ENCODE measurements at regions of chr2 and their contacts with region 1.

Region 1: DNA sequence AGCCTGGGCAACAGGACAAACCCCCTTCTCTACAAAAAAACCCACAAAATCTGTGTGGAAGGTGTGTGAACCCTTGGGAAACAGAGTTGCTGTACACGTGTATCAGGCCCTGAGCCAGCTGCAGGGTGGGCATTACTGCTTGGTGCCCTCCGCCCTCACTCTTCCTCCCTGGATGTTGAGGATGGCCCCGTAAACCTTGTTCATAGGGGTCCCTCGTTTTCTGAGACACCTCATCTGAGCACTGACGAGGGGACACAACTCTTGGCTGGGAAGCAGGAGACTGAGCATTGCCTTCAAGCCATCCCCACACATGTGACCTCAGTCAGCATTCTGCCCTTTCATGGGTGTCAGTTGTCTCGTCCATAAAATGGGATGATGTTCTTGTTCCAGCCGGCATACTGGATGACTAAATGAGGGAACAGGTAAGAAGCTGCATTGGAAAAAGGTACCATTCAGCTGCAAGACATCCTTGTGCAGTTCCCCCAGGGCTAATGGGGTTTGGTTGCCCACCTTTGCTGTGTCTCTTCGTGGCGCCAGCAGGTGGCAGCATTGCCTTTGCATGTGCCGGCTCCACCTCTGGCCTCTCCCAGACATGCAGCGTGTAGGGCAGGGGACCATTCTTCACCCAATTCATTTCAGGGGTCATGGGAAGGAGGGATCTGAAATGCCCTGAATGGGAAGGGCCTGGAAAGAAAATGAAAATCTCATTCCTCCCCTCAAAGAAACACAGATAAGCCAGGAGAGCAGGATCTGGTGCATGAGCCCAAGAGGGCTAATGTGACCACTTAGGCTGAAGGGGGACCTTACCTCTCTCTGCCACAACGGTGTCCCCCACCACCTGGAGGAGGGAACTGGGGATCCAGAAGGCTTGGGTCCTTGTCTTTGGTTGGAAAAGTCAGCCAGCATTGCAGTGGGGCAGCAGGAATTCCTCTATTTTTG is 36.4 kb upstream of the HAAO start:
- DNase-seq: peak; percentile 84 to 90
- ATAC-seq: peak; percentile 94
- H3K4me3 ChIP-seq: no peak overlapping the region
- H3K27ac ChIP-seq: no peak overlapping the region
- H3K4me1 ChIP-seq: no peaks in the 10 kb centered on the region
- H3K27me3 ChIP-seq: no peaks in the 10 kb centered on the region

Region 2: DNA sequence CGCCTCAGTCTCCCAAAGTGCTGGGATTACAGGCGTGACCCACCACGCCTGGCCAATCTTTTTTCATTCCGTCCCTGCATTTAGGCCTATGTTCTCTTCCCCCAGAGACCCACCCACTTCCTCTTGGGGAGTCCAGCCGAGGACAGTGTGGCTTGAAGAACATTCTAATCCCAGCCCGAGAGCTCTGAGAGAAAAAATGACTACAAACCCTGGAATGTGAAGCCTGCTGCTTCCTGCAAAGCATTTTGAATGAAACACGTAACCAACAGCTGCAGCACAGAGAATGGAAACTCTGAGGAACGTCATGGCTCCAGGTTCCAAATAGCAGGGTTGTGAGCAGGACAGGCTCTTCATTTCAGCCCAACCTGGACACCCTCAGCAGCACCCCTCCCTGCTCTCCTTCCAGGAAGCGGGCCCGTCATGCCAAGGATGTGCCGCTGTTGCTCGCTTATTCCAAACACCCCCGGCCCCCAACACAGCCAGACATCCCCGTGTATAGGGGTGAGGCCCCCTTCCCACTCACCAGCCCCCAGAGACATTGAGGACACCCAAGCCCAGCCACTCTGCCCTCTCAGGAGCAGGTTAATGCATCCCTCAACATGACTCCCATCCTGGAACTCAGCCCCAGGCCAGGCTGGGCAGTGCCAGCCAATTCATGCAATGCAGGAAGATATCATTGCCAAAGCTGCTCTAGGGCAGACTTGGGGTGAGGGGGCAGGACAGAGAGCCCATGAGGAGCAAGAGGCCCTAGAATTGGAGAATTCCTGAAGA is 257.9 kb after region 1 on chr2:
- intact Hi-C with region 1: no loop called
- DNase-seq: peak; percentile 85 to 89
- ATAC-seq: peak; percentile 92
- H3K4me3 ChIP-seq: no peak overlapping the region
- H3K27ac ChIP-seq: peak overlapping the region; percentile 94 to 99
- H3K4me1 ChIP-seq: peaks cover 0 to 6% of the 10 kb centered on the region in 2 donors
- H3K27me3 ChIP-seq: no peaks in the 10 kb centered on the region

Region 3: GRCh38 chr2:43239981-43240761 is 411.4 kb after region 1 on chr2:
- intact Hi-C with region 1: loop called in 1 of 2 experiments (anchors 10 kb)
- DNase-seq: no peak
- ATAC-seq: no peak
- H3K4me3 ChIP-seq: no peak overlapping the region
- H3K27ac ChIP-seq: no peak overlapping the region
- H3K4me1 ChIP-seq: no peaks in the 10 kb centered on the region
- H3K27me3 ChIP-seq: no peaks in the 10 kb centered on the region

Region 4: DNA sequence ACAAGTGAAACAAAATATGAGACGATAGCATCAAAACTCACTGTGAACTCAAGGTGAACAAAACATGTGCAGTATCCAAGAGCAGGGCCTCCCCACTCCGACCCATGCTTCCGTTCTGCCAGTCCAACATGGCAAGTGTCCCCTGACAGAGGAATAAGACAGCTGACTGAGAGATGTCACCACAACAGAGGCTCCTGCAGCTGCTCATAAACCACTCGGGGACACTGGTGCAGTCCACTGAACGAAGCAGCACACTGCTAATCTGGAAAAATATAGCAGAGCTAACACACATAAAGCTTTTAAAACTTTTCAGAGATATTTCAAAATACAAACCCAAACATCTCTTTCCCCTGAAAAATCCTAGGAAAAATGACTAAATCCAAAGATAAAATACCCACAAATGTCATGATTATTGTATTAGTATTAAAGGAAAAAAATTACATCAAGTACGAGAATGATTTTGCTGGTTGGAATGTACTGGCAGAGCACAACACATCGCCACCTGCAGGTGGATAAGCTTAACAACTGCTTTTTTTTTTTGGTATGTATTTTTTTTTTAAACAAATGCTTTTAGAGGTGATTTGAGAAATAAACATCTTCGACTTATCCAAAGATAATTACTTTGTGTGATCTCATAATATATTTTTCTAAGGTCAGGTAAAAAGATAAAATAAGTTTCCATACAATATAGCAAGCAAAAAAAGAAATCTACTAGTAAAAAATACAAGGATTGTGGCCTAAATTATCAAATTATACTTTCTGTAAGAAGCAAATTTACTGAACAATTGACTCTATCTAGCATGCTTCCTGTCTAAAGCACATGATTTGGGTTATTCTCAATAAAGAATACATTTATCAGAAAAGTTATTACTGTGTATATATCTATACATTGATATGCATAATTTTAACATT is 748.5 kb after region 1 on chr2:
- intact Hi-C with region 1: loop called (anchors 10 kb)
- DNase-seq: peak in 1 of 2 donors; percentile 51
- ATAC-seq: no peak
- H3K4me3 ChIP-seq: no peak overlapping the region
- H3K27ac ChIP-seq: peak overlapping the region in 1 of 2 donors; percentile 67
- H3K4me1 ChIP-seq: no peaks in the 10 kb centered on the region
- H3K27me3 ChIP-seq: no peaks in the 10 kb centered on the region

Measured in aorta (tissue), 5 donors.